ENCODE measurements at regions of chr14 and their contacts with region 1.

Region 1: DNA sequence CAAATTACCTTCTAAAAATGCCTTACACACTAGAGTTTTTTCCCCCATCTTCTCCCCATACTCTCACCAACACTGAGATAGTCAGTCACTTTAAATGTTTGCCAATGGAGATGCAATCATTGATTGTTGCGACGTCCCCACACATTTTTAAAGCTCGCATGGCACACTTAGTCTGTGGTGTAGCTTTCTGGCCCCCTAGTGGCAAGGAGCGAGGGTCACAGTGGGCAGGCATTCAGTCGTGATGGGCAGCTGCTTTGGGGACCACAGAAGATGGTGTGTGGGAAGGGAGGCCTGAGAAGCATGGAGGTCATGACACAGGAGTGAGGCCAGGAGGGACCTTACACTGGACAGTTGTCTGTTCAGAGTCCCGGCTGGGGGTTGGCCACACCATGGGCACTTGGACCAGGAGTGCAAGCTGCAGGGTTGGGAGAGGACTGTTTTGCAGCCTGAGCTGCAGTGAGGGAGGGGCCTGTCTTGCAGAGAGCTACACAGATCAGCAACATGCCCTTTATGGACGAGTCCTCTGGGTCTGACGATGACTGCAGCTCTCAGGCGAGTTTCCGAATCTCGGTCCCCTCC is 28.7 kb downstream of the PIGH start:
- DNase-seq: peak; percentile 42 to 86 (median 68)
- ATAC-seq: peak; percentile 91 to 100
- H3K4me3 Mint-ChIP-seq: no peak overlapping the region
- H3K27ac Mint-ChIP-seq: peak overlapping the region in 1 of 10 donors; percentile 58
- H3K4me1 Mint-ChIP-seq: peaks cover 0 to 7% (median 2%) of the 10 kb centered on the region in 4 donors
- H3K27me3 Mint-ChIP-seq: peaks cover 0 to 13% (median 5%) of the 10 kb centered on the region in 5 donors

Region 2: GRCh38 chr14:67426983-67427606 is 144.3 kb before region 1 on chr14:
- POLR2A ChIA-PET with region 1: interaction called, 16 read pairs
- DNase-seq: peak; percentile 55 to 88 (median 72)
- ATAC-seq: peak; percentile 90 to 97
- H3K4me3 Mint-ChIP-seq: peak overlapping the region in 1 of 10 donors; percentile 28
- H3K27ac Mint-ChIP-seq: peak overlapping the region in 3 of 10 donors; percentile 39 to 69 (median 62)
- H3K4me1 Mint-ChIP-seq: peaks cover 0 to 4% (median 0%) of the 10 kb centered on the region in 4 donors
- H3K27me3 Mint-ChIP-seq: peaks cover 3 to 27% (median 13%) of the 10 kb centered on the region in 5 donors

Region 3: GRCh38 chr14:67510121-67510520 is 61.2 kb before region 1 on chr14:
- POLR2A ChIA-PET with region 1: no interaction called
- DNase-seq: no peak
- ATAC-seq: no peak
- H3K4me3 Mint-ChIP-seq: no peak overlapping the region
- H3K27ac Mint-ChIP-seq: peak overlapping the region in 3 of 10 donors; percentile 9 to 55 (median 15)
- H3K4me1 Mint-ChIP-seq: peaks cover 15 to 39% (median 28%) of the 10 kb centered on the region in 4 donors
- H3K27me3 Mint-ChIP-seq: no peaks in the 10 kb centered on the region